ENCODE measurements at regions of chr19 and their contacts with region 1.

Region 1: DNA sequence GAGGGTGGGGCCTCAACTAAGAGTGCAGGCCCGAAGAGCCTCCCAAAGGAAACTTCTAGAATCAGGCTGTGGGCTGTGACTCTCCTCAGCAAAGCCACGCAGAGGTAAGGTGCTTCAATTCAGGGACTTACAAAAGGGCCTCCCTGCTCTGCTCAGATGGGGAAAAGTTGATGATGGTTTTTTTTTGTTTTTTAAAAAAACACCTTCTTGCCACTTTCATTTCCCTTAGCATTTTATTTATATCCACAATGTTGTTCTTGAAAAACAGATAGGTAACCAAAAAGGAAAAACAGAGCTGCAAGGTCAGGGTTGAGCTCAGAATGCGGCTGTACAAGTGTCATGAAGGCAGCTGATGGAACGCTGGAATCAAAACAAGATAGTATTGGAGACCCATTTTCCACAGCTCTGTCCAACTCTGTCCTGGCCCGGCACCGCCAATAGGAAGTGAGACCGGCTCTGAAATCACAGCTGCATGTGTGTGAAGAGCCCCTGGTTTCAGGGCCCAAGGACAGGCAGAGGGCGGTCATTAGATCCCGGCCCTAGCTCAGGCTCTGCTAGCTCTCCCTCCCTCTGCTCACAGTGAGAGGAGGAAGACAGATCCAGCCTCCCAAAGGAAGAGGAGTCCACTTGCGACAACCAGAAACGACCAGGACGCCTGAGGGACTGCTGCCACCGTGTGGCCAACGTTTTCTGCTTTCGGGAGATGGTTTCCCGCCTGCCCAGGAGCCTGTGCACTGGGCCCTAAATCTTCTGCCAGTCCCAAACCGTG is 58.3 kb downstream of the KLF2 start:
- DNase-seq: peak; percentile 79 to 87
- ATAC-seq: peak; percentile 62 to 79
- H3K4me3 ChIP-seq: peak overlapping the region in 2 of 4 donors; percentile 7 to 12
- H3K27ac ChIP-seq: peak overlapping the region; percentile 82 to 92 (median 90)
- H3K4me1 ChIP-seq: peaks cover 46 to 58% of the 10 kb centered on the region in 2 donors
- H3K27me3 ChIP-seq: no peaks in the 10 kb centered on the region
- CTCF ChIP-seq: peak; percentile 89 to 93 (median 90)
- POLR2A ChIP-seq: peak; percentile 30 to 61

Region 2: GRCh38 chr19:16283210-16284061 is 99.5 kb before region 1 on chr19:
- in situ Hi-C with region 1: no loop called
- intact Hi-C with region 1: loop called (anchors 1 kb)
- DNase-seq: peak; percentile 71 to 77
- ATAC-seq: peak; percentile 75 to 81
- H3K4me3 ChIP-seq: peak overlapping the region; percentile 41 to 50 (median 45)
- H3K27ac ChIP-seq: peak overlapping the region; percentile 82 to 95 (median 90)
- H3K4me1 ChIP-seq: peaks cover 31 to 43% of the 10 kb centered on the region in 2 donors
- H3K27me3 ChIP-seq: no peaks in the 10 kb centered on the region
- CTCF ChIP-seq: no peak
- POLR2A ChIP-seq: peak; percentile 78 to 92

Region 3: GRCh38 chr19:16338470-16339360 is 44.2 kb before region 1 on chr19:
- in situ Hi-C with region 1: no loop called
- intact Hi-C with region 1: loop called (anchors 5 kb)
- DNase-seq: no peak
- ATAC-seq: peak; percentile 3 to 12
- H3K4me3 ChIP-seq: no peak overlapping the region
- H3K27ac ChIP-seq: peak overlapping the region; percentile 41 to 84 (median 50)
- H3K4me1 ChIP-seq: peaks cover 33 to 36% of the 10 kb centered on the region in 2 donors
- H3K27me3 ChIP-seq: no peaks in the 10 kb centered on the region
- CTCF ChIP-seq: peak in 3 of 5 experiments; percentile 5 to 18 (median 17)
- POLR2A ChIP-seq: no peak

Region 4: DNA sequence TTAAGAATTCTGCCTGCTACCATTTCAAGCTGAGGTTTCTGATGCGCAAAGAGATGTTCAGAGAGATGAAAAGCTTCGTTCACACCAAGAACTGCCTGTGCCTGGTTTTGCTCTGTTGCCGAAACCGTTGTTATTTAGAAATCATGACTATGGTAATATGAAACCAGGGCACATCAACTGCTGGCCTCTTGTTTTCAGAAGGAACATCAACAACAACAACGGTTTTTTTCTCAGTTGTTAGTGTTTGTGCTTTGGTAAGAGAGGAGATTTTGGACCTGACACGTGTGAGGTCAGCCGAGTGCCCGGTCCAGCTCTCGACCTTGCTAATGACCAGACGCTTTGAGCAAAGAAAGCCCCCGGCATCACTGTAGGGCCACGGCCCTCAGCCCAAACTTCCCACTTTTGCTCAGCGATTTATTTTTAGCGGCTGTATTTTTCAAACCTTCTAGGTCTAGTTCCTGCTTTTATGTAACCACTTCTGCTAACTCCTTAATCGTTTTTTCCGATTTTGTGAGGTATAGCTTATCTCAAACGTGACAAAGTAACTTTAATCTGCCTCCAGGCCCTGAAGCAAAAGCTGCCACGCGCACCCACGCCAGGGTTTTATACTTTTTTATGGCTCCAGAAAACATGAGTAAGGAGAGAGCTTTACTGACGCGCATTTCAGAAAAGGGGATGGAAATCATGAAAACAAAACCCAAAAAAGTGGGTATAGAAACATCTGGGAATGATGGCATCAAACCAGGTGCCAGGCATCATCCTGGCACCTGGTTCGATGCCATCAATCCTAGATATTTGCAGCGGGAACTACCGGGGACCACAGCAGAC is 16.3 kb before region 1 on chr19:
- in situ Hi-C with region 1: no loop called
- intact Hi-C with region 1: loop called (anchors 1 kb)
- DNase-seq: peak; percentile 37 to 73
- ATAC-seq: peak; percentile 92
- H3K4me3 ChIP-seq: peak overlapping the region in 2 of 4 donors; percentile 8 to 17
- H3K27ac ChIP-seq: peak overlapping the region; percentile 35 to 86 (median 70)
- H3K4me1 ChIP-seq: peaks cover 18 to 59% of the 10 kb centered on the region in 2 donors
- H3K27me3 ChIP-seq: no peaks in the 10 kb centered on the region
- CTCF ChIP-seq: no peak
- POLR2A ChIP-seq: peak in 1 of 2 donors; percentile 36

Region 5: DNA sequence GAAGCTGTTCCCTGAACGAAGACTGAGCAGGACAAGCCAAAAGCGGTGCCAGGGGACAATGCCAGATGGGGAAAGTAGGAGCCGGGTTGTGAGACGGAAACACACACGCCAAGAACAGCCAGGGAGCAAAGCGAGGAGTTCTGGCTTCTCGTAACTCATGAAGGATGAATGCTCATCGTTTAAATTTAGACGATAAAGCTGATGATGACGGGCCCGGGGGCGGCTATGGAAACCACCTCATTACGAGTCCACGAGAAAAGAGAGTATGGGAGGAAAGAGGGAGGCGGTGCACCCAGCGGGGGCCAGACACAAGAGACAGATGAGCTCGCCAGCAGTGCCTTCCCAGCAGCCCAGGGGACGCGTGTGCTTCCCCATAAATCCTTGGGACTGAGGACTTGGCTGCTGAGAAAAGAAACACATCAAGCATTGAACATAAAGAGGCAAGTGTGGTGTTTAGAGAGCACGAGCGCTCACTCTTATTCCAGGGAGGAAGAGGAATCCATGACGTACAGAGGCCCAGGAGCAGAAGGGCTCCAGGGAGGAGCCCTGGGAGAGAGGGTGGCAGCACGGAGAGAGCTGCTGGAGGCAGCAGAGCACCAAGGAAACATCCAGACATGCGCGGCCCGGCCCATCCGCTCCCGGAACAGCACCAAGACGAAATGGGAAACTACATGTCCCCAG is 18.1 kb after region 1 on chr19:
- in situ Hi-C with region 1: no loop called
- intact Hi-C with region 1: no loop called
- DNase-seq: peak; percentile 50 to 77
- ATAC-seq: peak; percentile 73 to 79
- H3K4me3 ChIP-seq: no peak overlapping the region
- H3K27ac ChIP-seq: peak overlapping the region; percentile 76 to 86 (median 81)
- H3K4me1 ChIP-seq: peaks cover 14 to 28% of the 10 kb centered on the region in 2 donors
- H3K27me3 ChIP-seq: no peaks in the 10 kb centered on the region
- CTCF ChIP-seq: no peak
- POLR2A ChIP-seq: peak in 1 of 2 donors; percentile 7